ENCODE measurements at regions of chr11 and their contacts with region 1.

Region 1: GRCh38 chr11:130861902-130862860 is 54.1 kb downstream of the SNX19 start:
- DNase-seq: peak; percentile 93
- ATAC-seq: peak; percentile 96
- H3K4me3 Mint-ChIP-seq: no peak overlapping the region
- H3K27ac Mint-ChIP-seq: no peak overlapping the region
- H3K4me1 Mint-ChIP-seq: peaks cover 3% of the 10 kb centered on the region
- H3K27me3 Mint-ChIP-seq: peaks cover 3% of the 10 kb centered on the region
- CTCF ChIP-seq: peak; percentile 98

Region 2: DNA sequence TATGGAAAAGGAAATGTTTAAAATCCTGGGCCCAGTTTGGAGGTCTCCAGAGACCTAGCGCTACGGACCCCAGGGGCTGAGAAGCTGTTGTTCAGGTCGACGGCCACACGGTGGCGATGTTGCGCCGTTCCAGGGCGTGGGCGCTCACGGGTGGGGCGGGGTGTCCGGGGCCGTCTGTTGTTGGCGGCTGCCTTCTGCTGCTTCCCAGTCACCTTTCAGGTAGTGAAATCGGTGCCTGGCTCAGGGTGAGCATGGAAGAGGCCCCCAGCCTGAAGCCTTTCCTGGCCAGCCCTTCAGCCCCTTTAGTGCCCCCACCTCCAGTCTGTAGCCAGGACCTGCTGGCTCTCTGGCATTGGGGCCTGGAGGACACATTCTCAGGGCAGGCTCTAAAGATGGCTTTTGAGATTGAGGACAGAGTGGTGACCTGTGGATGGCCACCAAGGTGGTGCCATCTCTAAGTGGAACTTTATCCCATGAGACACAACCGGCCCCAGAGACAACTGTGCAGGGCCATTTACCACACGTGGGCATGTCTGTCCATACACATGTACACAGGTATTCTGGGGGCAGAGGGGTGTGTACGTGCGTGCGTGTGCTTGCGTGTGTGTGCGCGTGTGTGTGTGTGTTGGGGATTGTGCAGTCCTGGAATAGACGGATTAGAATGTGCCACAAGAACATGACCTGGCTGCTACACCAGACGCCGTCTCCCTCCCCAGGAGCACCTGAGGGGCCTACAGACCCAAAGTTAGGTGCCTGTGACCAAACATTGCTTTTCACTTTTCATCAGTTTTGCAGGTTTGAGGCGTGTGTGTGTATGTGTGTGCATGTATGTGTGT is 648.8 kb before region 1 on chr11:
- CTCF ChIA-PET with region 1: interaction called, 17 read pairs
- POLR2A ChIA-PET with region 1: interaction called, 3 read pairs
- intact Hi-C with region 1: loop called (anchors 5 kb)
- DNase-seq: peak; percentile 71
- ATAC-seq: peak; percentile 96
- H3K4me3 Mint-ChIP-seq: no peak overlapping the region
- H3K27ac Mint-ChIP-seq: no peak overlapping the region
- H3K4me1 Mint-ChIP-seq: no peaks in the 10 kb centered on the region
- H3K27me3 Mint-ChIP-seq: peaks cover 3% of the 10 kb centered on the region
- CTCF ChIP-seq: peak; percentile 97

Region 3: GRCh38 chr11:130434521-130435223 is 427.5 kb before region 1 on chr11:
- CTCF ChIA-PET with region 1: interaction called, 279 read pairs
- POLR2A ChIA-PET with region 1: no interaction called
- intact Hi-C with region 1: loop called (anchors 1 kb)
- DNase-seq: peak; percentile 77
- ATAC-seq: peak; percentile 83
- H3K4me3 Mint-ChIP-seq: no peak overlapping the region
- H3K27ac Mint-ChIP-seq: no peak overlapping the region
- H3K4me1 Mint-ChIP-seq: peaks cover 10% of the 10 kb centered on the region
- H3K27me3 Mint-ChIP-seq: peaks cover 16% of the 10 kb centered on the region
- CTCF ChIP-seq: peak; percentile 84

Region 4: GRCh38 chr11:130839981-130840666 is 22.1 kb before region 1 on chr11:
- CTCF ChIA-PET with region 1: interaction called, 24 read pairs
- POLR2A ChIA-PET with region 1: no interaction called
- intact Hi-C with region 1: no loop called
- DNase-seq: no peak
- ATAC-seq: no peak
- H3K4me3 Mint-ChIP-seq: no peak overlapping the region
- H3K27ac Mint-ChIP-seq: no peak overlapping the region
- H3K4me1 Mint-ChIP-seq: no peaks in the 10 kb centered on the region
- H3K27me3 Mint-ChIP-seq: peaks cover 14% of the 10 kb centered on the region
- CTCF ChIP-seq: no peak

Region 5: GRCh38 chr11:130894322-130895025 is 32.3 kb after region 1 on chr11:
- CTCF ChIA-PET with region 1: interaction called, 27 read pairs
- POLR2A ChIA-PET with region 1: no interaction called
- intact Hi-C with region 1: no loop called
- DNase-seq: peak; percentile 81
- ATAC-seq: peak; percentile 92
- H3K4me3 Mint-ChIP-seq: no peak overlapping the region
- H3K27ac Mint-ChIP-seq: no peak overlapping the region
- H3K4me1 Mint-ChIP-seq: no peaks in the 10 kb centered on the region
- H3K27me3 Mint-ChIP-seq: no peaks in the 10 kb centered on the region
- CTCF ChIP-seq: peak; percentile 95

Region 6: GRCh38 chr11:130979386-130979972 is 117.3 kb after region 1 on chr11:
- CTCF ChIA-PET with region 1: no interaction called
- POLR2A ChIA-PET with region 1: no interaction called
- intact Hi-C with region 1: no loop called
- DNase-seq: no peak
- ATAC-seq: no peak
- H3K4me3 Mint-ChIP-seq: no peak overlapping the region
- H3K27ac Mint-ChIP-seq: no peak overlapping the region
- H3K4me1 Mint-ChIP-seq: no peaks in the 10 kb centered on the region
- H3K27me3 Mint-ChIP-seq: peaks cover 20% of the 10 kb centered on the region
- CTCF ChIP-seq: no peak